IMR-90 (cell line): ENCODE measurements at regions of chr12 and their contacts with region 1.

Region 1: DNA sequence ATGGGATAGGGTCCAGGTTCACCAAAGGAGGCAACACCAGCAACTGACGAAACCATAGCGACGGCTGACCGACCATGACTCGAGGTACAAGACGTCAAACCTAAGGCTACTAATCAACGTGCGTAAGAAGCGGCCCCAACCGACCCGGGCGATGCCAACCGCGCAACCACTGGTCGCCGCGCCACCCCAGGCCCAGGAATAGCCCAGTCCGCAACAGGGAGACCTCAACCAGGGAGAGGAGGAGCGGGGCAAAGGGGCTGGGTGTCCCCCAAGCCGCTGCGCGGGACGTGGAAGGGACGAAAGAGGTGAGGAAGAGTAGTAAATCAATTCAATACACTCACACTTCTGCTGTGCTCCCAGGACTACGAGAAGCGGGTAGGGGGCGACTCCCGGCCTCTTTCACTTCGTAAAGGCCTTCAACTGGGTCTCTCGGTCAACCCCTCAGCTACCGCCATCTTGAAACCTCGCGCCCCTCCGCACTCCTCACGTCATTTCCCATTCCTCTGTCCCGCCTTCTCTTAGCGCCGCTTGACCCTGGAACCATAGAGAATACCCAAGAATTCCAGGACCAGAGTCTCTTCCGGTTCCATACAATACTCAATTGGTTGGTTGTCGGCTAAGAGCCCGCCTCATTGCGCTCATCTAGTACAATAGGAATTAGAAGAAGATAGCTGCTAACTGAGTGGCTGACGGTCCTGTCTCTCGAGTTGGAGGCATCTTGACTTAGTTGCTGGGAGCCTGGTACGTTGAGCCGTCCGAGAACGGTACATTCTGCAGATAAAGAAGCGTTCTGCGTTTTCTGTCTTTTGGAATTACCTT is at the starts of genes C12orf60 and WBP11:
- DNase-seq: peak; percentile 99
- ATAC-seq: peak; percentile 99
- H3K4me3 ChIP-seq: peak within 1 kb of the TSS; percentile 92
- H3K27ac ChIP-seq: peak within 1 kb of the TSS; percentile 82
- H3K4me1 ChIP-seq: no peaks in the 10 kb centered on the region
- H3K27me3 ChIP-seq: no peaks in the 10 kb centered on the region
- CTCF ChIP-seq: no peak
- POLR2A ChIP-seq: peak; percentile 89
- RAD21 ChIP-seq: no peak
- total RNA-seq, gene C12orf60: 1.1 TPM in 2 replicates
- total RNA-seq, gene WBP11: 2.5 and 3.9 TPM in 2 replicates

Region 2: GRCh38 chr12:14836302-14837210 is 33.3 kb after region 1 on chr12:
- CTCF ChIA-PET with region 1: no interaction called
- POLR2A ChIA-PET with region 1: no interaction called
- dilution Hi-C with region 1: no loop called
- in situ Hi-C with region 1: no loop called
- intact Hi-C with region 1: loop called (anchors 2 kb)
- DNase-seq: peak; percentile 90
- ATAC-seq: peak; percentile 88
- H3K4me3 ChIP-seq: peak overlapping the region; percentile 3; the same call in 1 of the 2 replicates
- H3K27ac ChIP-seq: peak overlapping the region; percentile 56
- H3K4me1 ChIP-seq: peaks cover 3% of the 10 kb centered on the region; the same call in 1 of the 2 replicates
- H3K27me3 ChIP-seq: no peaks in the 10 kb centered on the region
- CTCF ChIP-seq: no peak
- POLR2A ChIP-seq: no peak
- RAD21 ChIP-seq: no peak

Region 3: DNA sequence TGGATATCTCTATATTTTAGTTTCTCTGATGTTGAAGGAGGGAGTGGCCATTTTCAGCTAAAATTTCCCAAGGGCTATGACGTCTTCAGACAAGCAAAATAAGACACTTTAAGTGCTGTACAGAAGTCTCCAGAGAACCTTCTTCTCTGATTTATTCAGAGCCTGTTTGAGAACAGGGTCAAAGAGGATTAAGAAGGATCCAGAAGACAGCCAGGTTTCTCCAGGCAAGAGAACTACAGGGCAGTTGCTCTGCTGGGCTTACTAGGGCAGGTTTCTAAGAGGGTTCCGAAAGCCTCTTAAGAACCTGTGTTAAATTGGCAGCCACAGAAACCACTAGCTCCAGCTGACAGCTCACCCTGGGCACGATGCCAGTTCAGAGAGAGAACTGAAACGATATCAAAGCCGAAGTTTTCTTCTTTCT is 81.2 kb after region 1 on chr12:
- CTCF ChIA-PET with region 1: no interaction called
- POLR2A ChIA-PET with region 1: no interaction called
- dilution Hi-C with region 1: no loop called
- in situ Hi-C with region 1: no loop called
- intact Hi-C with region 1: no loop called
- DNase-seq: peak; percentile 72
- ATAC-seq: peak; percentile 66
- H3K4me3 ChIP-seq: no peak overlapping the region
- H3K27ac ChIP-seq: no peak overlapping the region
- H3K4me1 ChIP-seq: peaks cover 8% of the 10 kb centered on the region; the same call in 1 of the 2 replicates
- H3K27me3 ChIP-seq: peaks cover 8% of the 10 kb centered on the region
- CTCF ChIP-seq: no peak
- POLR2A ChIP-seq: no peak
- RAD21 ChIP-seq: no peak